Aorta (tissue), 5 donors: ENCODE measurements at regions of chr2 and their contacts with region 1.

Region 1: DNA sequence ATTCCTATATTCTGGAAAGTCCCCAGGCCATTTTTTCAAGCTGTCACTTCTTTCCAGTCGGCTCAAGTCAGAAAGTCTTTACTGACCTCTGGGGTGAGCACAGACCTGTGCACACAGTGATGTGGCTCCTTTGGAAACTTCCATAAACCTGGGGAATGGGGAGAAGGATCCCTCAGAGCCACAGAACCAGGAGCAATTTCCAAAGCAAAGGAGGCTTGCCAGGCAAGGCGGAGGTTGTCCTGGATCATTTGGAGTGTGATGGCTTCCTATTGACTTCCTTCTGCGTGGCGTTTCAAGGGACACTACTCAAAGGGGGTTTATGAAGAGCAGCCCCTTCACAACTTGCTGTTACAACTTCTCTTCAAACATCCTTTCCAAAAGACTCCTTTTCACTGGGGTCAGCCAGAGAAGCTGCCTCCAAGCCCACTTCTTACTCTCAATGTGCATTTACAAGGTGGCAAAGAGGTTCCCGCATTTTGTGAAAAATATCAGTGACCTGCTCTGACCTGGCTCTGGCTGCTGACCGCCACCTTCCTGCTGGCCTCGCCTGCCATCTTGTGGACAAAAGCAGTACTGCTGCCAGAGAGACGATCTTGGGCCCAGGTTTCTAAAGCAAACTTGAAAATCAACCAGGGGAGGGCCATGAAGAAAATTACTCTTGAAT is 18.2 kb upstream of the TMEM247 start:
- DNase-seq: peak; percentile 80 to 93
- ATAC-seq: peak; percentile 86
- H3K4me3 ChIP-seq: no peak overlapping the region
- H3K27ac ChIP-seq: no peak overlapping the region
- H3K4me1 ChIP-seq: no peaks in the 10 kb centered on the region
- H3K27me3 ChIP-seq: no peaks in the 10 kb centered on the region

Region 2: DNA sequence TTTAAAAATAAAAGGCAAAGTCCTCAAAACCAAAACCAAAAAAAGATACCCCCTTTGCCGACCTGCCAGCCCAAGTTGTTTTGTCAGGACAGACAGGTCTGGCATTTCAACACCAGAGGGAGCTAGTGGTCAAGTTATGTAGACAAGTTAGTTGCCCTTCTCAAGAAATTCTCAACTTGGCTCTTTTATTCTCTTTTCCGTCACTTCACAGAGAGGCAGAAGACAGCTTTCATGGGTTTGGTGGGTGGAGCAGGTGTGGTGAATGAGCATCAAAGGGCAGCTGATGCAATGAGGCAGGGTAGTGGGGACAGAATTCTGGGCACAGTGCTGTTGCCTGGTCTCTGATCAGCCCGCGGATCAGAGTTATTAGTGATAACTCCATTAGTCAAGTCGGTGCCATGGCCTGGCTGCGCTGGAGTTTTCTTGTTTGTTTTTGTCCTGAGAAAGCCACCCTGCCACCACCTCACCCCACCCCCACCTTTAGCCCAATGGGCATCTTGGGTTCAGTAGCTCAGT is 467.6 kb before region 1 on chr2:
- intact Hi-C with region 1: loop called in 1 of 2 experiments (anchors 1 kb)
- DNase-seq: peak in 1 of 2 donors; percentile 69
- ATAC-seq: peak; percentile 86
- H3K4me3 ChIP-seq: no peak overlapping the region
- H3K27ac ChIP-seq: peak overlapping the region in 1 of 2 donors; percentile 68
- H3K4me1 ChIP-seq: no peaks in the 10 kb centered on the region
- H3K27me3 ChIP-seq: no peaks in the 10 kb centered on the region

Region 3: DNA sequence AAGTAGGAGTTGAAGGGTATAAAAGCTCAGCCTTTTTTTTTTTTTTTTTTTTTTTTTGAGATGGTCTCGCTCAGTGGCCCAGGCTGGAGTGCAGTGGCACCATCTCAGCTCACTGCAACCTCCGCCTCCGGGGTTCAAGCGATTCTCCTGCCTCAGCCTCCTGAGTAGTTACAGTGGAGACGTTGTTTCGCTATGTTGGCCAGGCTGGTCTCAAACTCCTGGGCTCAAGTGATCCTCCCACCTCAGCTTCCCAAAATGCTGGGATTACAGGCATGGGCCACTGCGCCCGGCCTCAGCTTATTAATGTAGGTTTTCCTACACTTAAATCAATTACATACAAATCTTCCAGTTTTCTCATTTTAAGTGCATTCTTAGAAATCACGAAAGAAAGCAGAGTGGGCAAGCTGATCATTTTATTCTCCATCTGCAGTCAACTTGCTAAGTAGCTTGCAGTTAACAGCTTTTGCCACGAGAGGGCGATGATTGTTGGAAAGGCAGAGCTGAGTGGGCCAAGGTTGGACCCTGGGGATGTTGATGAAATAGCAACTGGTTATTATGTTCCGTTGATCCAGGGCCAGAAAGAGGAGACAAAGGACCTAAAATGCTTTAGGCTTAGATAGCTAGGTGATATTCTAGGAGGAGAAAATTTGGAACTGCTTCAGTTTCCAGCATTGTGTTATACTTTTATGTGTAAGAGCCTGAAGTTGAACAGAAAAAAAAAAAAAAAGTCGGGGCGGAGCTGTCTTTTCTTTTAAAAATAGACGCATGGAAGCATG is 398.3 kb before region 1 on chr2:
- intact Hi-C with region 1: loop called in 1 of 2 experiments (anchors 2 kb)
- DNase-seq: peak; percentile 84
- ATAC-seq: peak; percentile 89
- H3K4me3 ChIP-seq: no peak overlapping the region
- H3K27ac ChIP-seq: no peak overlapping the region
- H3K4me1 ChIP-seq: no peaks in the 10 kb centered on the region
- H3K27me3 ChIP-seq: peaks cover 0 to 2% of the 10 kb centered on the region in 2 donors

Region 4: DNA sequence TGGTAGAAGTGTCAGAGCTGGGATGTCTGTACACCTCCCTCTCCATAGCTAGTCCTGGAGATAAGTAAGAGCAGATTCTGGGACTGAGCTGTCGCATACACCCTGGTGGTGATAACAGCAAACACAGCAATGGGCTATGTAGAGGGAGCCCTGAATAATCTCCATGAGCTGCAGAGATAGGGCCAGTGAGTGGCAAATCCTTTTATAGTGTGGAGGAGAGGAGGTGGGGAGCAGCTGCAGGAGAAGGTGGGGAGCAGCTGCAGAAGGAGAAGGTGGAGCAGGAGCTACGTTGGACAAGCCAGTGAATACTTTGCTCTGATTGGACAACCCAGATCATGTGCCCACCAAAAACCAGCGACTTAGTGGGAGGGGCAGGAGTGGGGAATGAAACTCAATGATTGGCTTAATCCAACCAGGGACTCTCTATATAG is 103.7 kb after region 1 on chr2:
- intact Hi-C with region 1: no loop called
- DNase-seq: no peak
- ATAC-seq: no peak
- H3K4me3 ChIP-seq: no peak overlapping the region
- H3K27ac ChIP-seq: no peak overlapping the region
- H3K4me1 ChIP-seq: peaks cover 0 to 4% of the 10 kb centered on the region in 2 donors
- H3K27me3 ChIP-seq: no peaks in the 10 kb centered on the region

Region 5: GRCh38 chr2:46601328-46601963 is 140.3 kb after region 1 on chr2:
- intact Hi-C with region 1: loop called in 1 of 2 experiments (anchors 2 kb)
- DNase-seq: no peak
- ATAC-seq: no peak
- H3K4me3 ChIP-seq: no peak overlapping the region
- H3K27ac ChIP-seq: no peak overlapping the region
- H3K4me1 ChIP-seq: no peaks in the 10 kb centered on the region
- H3K27me3 ChIP-seq: no peaks in the 10 kb centered on the region

Region 6: GRCh38 chr2:46632349-46632748 is 171.2 kb after region 1 on chr2:
- intact Hi-C with region 1: no loop called
- DNase-seq: no peak
- ATAC-seq: no peak
- H3K4me3 ChIP-seq: no peak overlapping the region
- H3K27ac ChIP-seq: no peak overlapping the region
- H3K4me1 ChIP-seq: no peaks in the 10 kb centered on the region
- H3K27me3 ChIP-seq: no peaks in the 10 kb centered on the region

Region 7: GRCh38 chr2:46650556-46651001 is 189.4 kb after region 1 on chr2:
- intact Hi-C with region 1: loop called (anchors 2 kb)
- DNase-seq: peak in 1 of 2 donors; percentile 72
- ATAC-seq: no peak
- H3K4me3 ChIP-seq: no peak overlapping the region
- H3K27ac ChIP-seq: no peak overlapping the region
- H3K4me1 ChIP-seq: no peaks in the 10 kb centered on the region
- H3K27me3 ChIP-seq: no peaks in the 10 kb centered on the region